Esophagus muscularis mucosa (tissue), 4 donors: ENCODE measurements at regions of chr7 and their contacts with region 1.

Region 1: DNA sequence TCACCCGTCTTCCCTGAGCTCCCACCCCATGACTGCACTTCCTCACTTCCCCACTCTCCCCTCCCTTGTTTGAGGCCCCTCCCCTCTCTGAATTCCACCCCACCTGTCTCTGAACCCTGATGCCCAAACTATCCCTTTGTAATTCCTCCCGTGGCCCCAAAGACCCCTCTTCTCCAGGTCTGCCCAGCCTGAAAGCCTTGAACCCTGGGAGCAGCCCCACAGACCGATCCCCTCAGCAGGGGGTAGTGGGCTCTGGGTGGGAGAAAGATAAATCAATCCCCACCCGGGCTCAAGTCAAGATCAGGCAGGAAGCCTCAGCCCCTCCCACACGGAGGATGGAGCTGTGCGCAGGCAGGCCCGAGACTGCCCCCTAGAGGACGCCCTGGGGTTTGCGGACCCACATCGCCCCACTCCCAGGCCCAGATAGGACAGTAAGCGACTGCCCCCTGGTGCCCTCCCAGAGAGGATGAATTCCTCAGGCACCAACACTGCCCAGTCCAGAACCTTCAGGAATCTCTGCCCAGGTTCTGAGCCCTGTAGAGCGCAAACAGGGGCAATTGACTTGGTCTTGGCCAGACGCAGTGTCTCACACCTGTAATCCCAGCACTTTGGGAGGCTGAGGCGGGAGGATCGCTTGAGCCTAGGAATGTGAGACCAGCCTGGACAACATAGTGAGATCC is 11.7 kb downstream of the HSPB1 start:
- DNase-seq: peak; percentile 99
- H3K4me3 ChIP-seq: no peak overlapping the region
- H3K27ac ChIP-seq: peak overlapping the region; percentile 7 to 61 (median 10)
- H3K4me1 ChIP-seq: peaks cover 22 to 48% (median 39%) of the 10 kb centered on the region in 4 donors
- H3K27me3 ChIP-seq: no peaks in the 10 kb centered on the region
- CTCF ChIP-seq: peak in 2 of 3 experiments; percentile 100
- EP300 ChIP-seq: no peak
- POLR2A ChIP-seq: no peak

Region 2: DNA sequence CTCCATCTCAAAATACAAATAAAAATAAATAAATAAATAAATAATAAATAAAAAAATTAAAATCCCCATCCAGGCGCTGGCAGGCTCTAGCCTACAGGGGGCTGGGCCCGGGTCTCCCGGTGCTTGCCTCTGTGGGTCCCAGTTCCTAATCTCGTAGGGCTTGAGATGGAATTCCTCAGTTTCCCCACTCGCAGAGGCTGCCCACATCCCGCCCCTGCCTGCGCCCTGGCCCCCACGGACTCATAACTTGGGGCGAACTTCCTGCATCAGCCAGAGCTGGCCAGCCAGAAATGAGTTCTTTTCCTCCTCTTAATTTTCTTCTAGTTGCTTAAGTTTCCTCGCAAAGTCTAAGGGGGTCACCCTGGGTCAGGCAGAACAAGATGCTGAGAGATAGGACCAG is 134.5 kb before region 1 on chr7:
- intact Hi-C with region 1: loop called (anchors 2 kb)
- DNase-seq: no peak
- H3K4me3 ChIP-seq: no peak overlapping the region
- H3K27ac ChIP-seq: no peak overlapping the region
- H3K4me1 ChIP-seq: peaks cover 0 to 10% (median 7%) of the 10 kb centered on the region in 4 donors
- H3K27me3 ChIP-seq: no peaks in the 10 kb centered on the region
- CTCF ChIP-seq: no peak
- EP300 ChIP-seq: no peak
- POLR2A ChIP-seq: no peak

Region 3: DNA sequence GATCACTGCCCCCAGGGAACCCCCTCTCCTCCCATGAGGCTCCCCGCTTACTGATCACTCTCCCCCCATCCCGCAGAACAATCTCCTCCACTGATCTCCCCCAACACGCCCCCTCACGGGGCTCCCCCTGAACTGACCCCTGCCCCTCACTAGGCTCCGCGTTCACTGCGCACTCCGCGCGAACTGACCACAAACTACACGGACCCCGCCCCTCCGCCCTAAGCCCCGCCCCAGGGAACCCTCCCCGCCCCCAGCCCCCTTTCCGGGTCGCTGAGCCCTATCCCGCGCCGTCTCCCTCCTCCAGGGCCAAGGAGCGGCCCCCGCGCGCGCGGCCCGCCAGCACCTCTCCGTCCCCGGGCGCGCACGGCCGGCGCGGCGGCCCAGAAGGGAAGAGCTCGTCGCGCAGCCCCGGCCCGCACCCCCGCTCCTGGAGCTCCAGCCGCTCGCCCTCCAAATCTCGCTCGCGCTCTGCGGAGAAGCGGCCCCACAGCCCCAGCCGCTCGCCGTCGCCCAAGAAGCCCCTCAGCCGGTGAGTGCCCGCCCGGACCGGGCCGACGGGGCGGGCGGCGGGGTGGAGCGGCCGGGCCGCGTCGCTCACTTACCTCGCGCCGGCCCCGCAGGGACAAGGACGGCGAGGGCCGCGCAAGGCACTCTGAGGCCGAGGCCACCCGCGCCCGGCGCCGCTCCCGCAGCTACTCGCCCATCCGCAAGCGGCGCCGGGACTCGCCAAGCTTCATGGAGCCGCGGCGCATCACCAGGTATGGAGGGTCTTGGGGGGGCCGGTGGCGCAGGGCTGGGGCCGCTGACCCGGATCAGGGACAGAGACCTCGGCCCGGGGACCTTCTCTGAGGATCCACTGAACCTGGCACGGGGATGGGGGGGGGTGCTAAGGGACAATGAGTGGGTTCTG is 31.6 kb before region 1 on chr7:
- intact Hi-C with region 1: loop called (anchors 5 kb)
- DNase-seq: no peak
- H3K4me3 ChIP-seq: peak overlapping the region; percentile 55 to 73 (median 59)
- H3K27ac ChIP-seq: peak overlapping the region in 1 of 4 donors; percentile 34
- H3K4me1 ChIP-seq: peaks cover 3 to 33% (median 31%) of the 10 kb centered on the region in 4 donors
- H3K27me3 ChIP-seq: peaks cover 0 to 47% (median 12%) of the 10 kb centered on the region in 4 donors
- CTCF ChIP-seq: no peak
- EP300 ChIP-seq: no peak
- POLR2A ChIP-seq: no peak

Region 4: GRCh38 chr7:76291343-76292212 is 22.6 kb before region 1 on chr7:
- intact Hi-C with region 1: loop called (anchors 1 kb)
- DNase-seq: peak; percentile 99
- H3K4me3 ChIP-seq: peak overlapping the region; percentile 43 to 57 (median 46)
- H3K27ac ChIP-seq: peak overlapping the region; percentile 93 to 100 (median 99)
- H3K4me1 ChIP-seq: peaks cover 48 to 57% (median 57%) of the 10 kb centered on the region in 4 donors
- H3K27me3 ChIP-seq: no peaks in the 10 kb centered on the region
- CTCF ChIP-seq: peak; percentile 96 to 99 (median 97)
- EP300 ChIP-seq: no peak
- POLR2A ChIP-seq: no peak

Region 5: GRCh38 chr7:76359111-76359978 is 45.2 kb after region 1 on chr7:
- intact Hi-C with region 1: loop called (anchors 2 kb)
- DNase-seq: peak; percentile 99
- H3K4me3 ChIP-seq: peak overlapping the region; percentile 88 to 99 (median 94)
- H3K27ac ChIP-seq: peak overlapping the region; percentile 99 to 100 (median 100)
- H3K4me1 ChIP-seq: peaks cover 32 to 56% (median 50%) of the 10 kb centered on the region in 4 donors
- H3K27me3 ChIP-seq: no peaks in the 10 kb centered on the region
- CTCF ChIP-seq: peak; percentile 58 to 83 (median 76)
- EP300 ChIP-seq: peak; percentile 66
- POLR2A ChIP-seq: peak; percentile 9